Esophagus muscularis mucosa (tissue), 4 donors: ENCODE measurements at regions of chr5 and their contacts with region 1.

Region 1: GRCh38 chr5:113378959-113379541 is 55.7 kb downstream of the TSSK1B start:
- DNase-seq: no peak
- H3K4me3 ChIP-seq: no peak overlapping the region
- H3K27ac ChIP-seq: no peak overlapping the region
- H3K4me1 ChIP-seq: peaks cover 0 to 5% (median 0%) of the 10 kb centered on the region in 4 donors
- H3K27me3 ChIP-seq: no peaks in the 10 kb centered on the region
- CTCF ChIP-seq: peak; percentile 64 to 77 (median 66)
- EP300 ChIP-seq: no peak
- POLR2A ChIP-seq: no peak

Region 2: DNA sequence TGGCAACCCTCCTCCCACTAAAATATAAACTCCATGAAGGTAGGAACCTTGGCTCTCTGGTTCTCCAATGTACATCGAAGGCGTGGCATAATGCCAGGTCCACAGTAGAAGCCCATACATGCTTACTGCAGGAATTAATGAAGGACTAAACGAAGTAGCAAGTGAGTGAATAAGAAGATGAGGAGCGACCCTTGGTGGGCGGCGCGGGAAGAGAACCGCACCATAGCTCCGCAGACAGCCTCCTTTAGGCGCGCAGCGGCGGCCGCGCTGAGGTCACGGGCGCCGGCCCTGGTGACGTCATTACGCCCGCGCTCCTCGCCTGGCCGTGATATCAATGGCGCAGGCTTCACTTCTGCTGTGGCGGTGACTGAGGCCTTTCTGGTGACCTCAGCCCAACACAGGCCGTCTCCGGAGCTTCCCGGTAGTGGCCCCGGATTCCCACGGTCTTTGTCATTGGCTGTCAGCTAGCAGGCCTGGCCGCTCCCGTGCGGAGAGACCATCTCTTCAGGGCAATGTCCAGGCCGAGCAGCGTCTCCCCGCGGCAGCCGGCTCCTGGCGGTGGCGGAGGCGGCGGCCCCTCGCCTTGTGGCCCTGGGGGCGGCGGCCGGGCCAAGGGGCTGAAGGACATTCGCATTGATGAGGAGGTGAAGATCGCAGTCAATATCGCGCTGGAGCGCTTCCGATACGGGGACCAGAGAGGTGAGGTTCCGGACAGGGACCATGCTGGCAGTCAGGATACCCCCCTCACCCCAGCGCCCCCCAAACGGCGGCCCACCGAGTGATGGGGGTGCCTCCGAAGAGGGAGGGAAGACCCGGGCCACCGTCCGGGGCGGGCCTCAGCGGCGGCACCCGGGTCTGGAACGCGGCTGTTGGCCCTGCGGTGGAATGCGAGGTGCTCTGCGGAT is 134.6 kb after region 1 on chr5 and contains the start of gene YTHDC2:
- intact Hi-C with region 1: loop called (anchors 5 kb)
- DNase-seq: peak; percentile 96
- H3K4me3 ChIP-seq: peak within 1 kb of the TSS; percentile 74 to 88 (median 77)
- H3K27ac ChIP-seq: peak within 1 kb of the TSS; percentile 92 to 95 (median 94)
- H3K4me1 ChIP-seq: peaks cover 10 to 31% (median 31%) of the 10 kb centered on the region in 4 donors
- H3K27me3 ChIP-seq: peaks cover 0 to under 1% (median 0%) of the 10 kb centered on the region in 4 donors
- CTCF ChIP-seq: peak in 1 of 3 experiments; percentile 19
- EP300 ChIP-seq: no peak
- POLR2A ChIP-seq: peak; percentile 24
- total RNA-seq, gene YTHDC2: 9.3 to 32.0 (median 15.8) TPM

Region 3: DNA sequence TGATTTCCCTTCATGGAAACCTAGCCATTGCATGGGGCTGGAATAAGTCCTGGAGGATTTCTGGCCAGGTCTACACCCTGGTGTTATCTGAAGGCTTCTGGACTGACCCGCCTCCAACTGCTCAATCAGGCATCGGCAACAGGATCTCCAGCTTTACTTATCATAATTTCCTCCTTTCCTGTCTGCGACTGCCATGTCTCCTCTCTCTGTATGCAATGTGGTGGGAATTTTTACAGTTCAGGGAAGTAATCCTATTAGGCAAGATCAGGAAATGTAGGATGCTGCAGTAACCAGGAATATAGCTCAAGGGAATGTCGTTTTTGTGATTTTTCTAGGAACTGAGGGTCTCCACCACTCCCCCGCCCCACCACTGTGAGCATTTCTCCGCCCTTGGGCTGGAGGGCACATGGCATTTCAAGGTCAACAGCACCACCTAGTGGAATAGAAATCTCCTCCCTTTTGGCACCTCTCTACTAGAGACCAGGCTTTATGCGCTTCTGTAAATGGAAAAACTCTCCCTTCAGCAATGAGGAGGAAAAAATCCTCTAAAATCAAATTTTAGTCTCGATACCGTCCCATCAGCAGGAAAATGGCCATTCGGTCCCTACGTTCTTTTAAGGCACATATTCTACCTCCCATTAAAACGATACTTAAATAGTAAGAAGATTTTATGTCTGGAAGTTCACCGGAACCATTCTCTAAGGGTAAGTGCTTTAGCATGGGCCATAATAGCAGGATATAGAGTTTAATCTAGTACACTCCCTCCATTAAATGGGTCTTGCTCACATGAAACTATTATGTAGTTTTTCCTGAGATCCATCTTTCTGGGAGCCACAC is 227.5 kb after region 1 on chr5:
- intact Hi-C with region 1: loop called (anchors 5 kb)
- DNase-seq: no peak
- H3K4me3 ChIP-seq: peak overlapping the region in 1 of 4 donors; percentile 2
- H3K27ac ChIP-seq: no peak overlapping the region
- H3K4me1 ChIP-seq: peaks cover 0 to 9% (median 4%) of the 10 kb centered on the region in 4 donors
- H3K27me3 ChIP-seq: peaks cover 0 to 34% (median 0%) of the 10 kb centered on the region in 4 donors
- CTCF ChIP-seq: peak; percentile 48 to 68 (median 61)
- EP300 ChIP-seq: no peak
- POLR2A ChIP-seq: no peak